ENCODE measurements at regions of chr7 and their contacts with region 1.

Region 1: GRCh38 chr7:107563775-107564552 is at the starts of genes COG5 and DUS4L:
- DNase-seq: peak; percentile 73 to 93 (median 86)
- ATAC-seq: peak; percentile 83
- H3K4me3 ChIP-seq: peak within 1 kb of the TSS; percentile 91 to 97
- H3K4me3 Mint-ChIP-seq: peak within 1 kb of the TSS; percentile 80
- H3K27ac ChIP-seq: peak within 1 kb of the TSS; percentile 95 to 96
- H3K27ac Mint-ChIP-seq: peak within 1 kb of the TSS; percentile 89
- H3K4me1 ChIP-seq: peaks cover 46% of the 10 kb centered on the region
- H3K4me1 Mint-ChIP-seq: peaks cover 65% of the 10 kb centered on the region
- H3K27me3 ChIP-seq: no peaks in the 10 kb centered on the region
- H3K27me3 Mint-ChIP-seq: no peaks in the 10 kb centered on the region
- CTCF ChIP-seq: no peak
- total RNA-seq, gene COG5: 45.7 to 46.8 TPM
- total RNA-seq, gene DUS4L: 13.1 to 16.4 TPM

Region 2: GRCh38 chr7:106914018-106914607 is 649.9 kb before region 1 on chr7:
- CTCF ChIA-PET with region 1: no interaction called
- POLR2A ChIA-PET with region 1: no interaction called
- intact Hi-C with region 1: no loop called
- DNase-seq: no peak
- ATAC-seq: no peak
- H3K4me3 ChIP-seq: no peak overlapping the region
- H3K4me3 Mint-ChIP-seq: no peak overlapping the region
- H3K27ac ChIP-seq: no peak overlapping the region
- H3K27ac Mint-ChIP-seq: no peak overlapping the region
- H3K4me1 ChIP-seq: no peaks in the 10 kb centered on the region
- H3K4me1 Mint-ChIP-seq: no peaks in the 10 kb centered on the region
- H3K27me3 ChIP-seq: no peaks in the 10 kb centered on the region
- H3K27me3 Mint-ChIP-seq: no peaks in the 10 kb centered on the region
- CTCF ChIP-seq: no peak

Region 3: DNA sequence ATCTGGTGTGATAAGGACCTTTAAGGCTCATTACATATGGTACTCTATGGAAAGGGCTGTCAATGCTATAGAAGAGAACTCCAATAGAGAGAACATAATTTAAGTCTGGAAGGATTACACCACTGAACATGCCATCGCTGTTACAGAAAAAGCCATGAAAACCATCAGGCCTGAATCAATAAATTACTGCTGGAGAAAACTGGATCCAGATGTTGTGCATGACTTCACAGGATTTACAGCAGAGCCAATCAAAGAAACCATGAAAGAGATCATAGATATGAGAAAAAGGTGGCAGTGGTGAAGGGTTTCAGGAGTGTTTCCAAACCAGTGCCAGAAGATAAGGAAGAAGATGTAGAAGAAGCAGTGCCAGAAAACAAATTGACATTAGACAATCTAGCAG is 113.0 kb before region 1 on chr7:
- CTCF ChIA-PET with region 1: no interaction called
- POLR2A ChIA-PET with region 1: no interaction called
- intact Hi-C with region 1: no loop called
- DNase-seq: no peak
- ATAC-seq: no peak
- H3K4me3 ChIP-seq: no peak overlapping the region
- H3K4me3 Mint-ChIP-seq: no peak overlapping the region
- H3K27ac ChIP-seq: no peak overlapping the region
- H3K27ac Mint-ChIP-seq: no peak overlapping the region
- H3K4me1 ChIP-seq: no peaks in the 10 kb centered on the region
- H3K4me1 Mint-ChIP-seq: peaks cover 24% of the 10 kb centered on the region
- H3K27me3 ChIP-seq: no peaks in the 10 kb centered on the region
- H3K27me3 Mint-ChIP-seq: no peaks in the 10 kb centered on the region
- CTCF ChIP-seq: no peak

Region 4: DNA sequence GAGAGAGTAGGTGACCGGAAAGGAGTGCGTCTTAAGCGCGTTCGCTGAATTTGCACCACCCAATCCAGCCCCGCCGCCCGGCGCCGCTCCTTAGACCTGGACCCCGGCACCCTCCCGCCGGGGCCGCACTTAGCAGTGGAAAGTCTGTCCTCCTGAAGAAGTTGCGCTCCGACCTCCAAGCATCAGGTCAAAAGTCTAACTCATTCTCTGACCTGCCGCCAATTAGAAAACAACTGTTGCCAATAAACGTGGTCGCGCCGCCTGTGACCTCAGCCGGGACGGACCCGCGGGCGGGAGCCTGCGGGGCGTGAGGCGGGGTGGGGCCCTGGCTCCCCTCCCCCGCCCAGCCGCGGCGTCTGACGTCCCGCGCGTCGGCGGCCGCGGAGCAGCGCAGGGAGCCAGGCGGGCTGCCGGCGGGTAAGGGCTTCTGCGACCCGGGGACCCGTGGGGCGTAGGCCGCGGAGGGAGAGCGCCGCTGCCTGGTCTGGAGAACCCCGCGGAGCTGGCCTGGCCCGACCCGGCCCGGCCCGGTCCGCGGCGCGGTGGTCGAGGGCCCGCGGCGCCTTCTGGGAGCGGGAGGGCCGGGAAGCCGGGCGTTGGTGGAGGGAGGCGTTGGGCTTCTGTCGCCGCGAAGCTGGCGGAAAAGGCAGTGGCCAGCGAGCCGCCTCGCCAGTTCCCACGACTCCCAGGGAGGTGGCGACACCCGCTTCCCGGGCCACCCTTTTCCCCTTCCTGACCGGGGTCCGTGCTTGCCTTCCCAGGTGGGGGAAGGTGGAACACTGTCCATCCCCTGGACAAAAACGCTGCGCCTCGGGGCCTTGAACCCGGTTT is 16.1 kb after region 1 on chr7 and contains the start of gene BCAP29:
- CTCF ChIA-PET with region 1: no interaction called
- POLR2A ChIA-PET with region 1: interaction called, 17 read pairs
- intact Hi-C with region 1: loop called (anchors 1 to 2 kb)
- DNase-seq: peak; percentile 22 to 87 (median 59)
- ATAC-seq: peak; percentile 95
- H3K4me3 ChIP-seq: peak within 1 kb of the TSS; percentile 81 to 91
- H3K4me3 Mint-ChIP-seq: peak within 1 kb of the TSS; percentile 90
- H3K27ac ChIP-seq: peak within 1 kb of the TSS; percentile 67 to 69
- H3K27ac Mint-ChIP-seq: peak within 1 kb of the TSS; percentile 91
- H3K4me1 ChIP-seq: peaks cover 14% of the 10 kb centered on the region
- H3K4me1 Mint-ChIP-seq: peaks cover 25% of the 10 kb centered on the region
- H3K27me3 ChIP-seq: no peaks in the 10 kb centered on the region
- H3K27me3 Mint-ChIP-seq: no peaks in the 10 kb centered on the region
- CTCF ChIP-seq: no peak
- total RNA-seq, gene BCAP29: 7.9 to 9.0 TPM

Region 5: GRCh38 chr7:108525985-108526767 is 962.2 kb after region 1 on chr7 and contains the start of gene PNPLA8:
- CTCF ChIA-PET with region 1: no interaction called
- POLR2A ChIA-PET with region 1: no interaction called
- intact Hi-C with region 1: loop called in 1 of 2 experiments (anchors 5 kb)
- DNase-seq: peak; percentile 100
- ATAC-seq: peak; percentile 90
- H3K4me3 ChIP-seq: peak within 1 kb of the TSS; percentile 80 to 93
- H3K4me3 Mint-ChIP-seq: peak within 1 kb of the TSS; percentile 97
- H3K27ac ChIP-seq: peak within 1 kb of the TSS; percentile 94 to 96
- H3K27ac Mint-ChIP-seq: peak within 1 kb of the TSS; percentile 99
- H3K4me1 ChIP-seq: peaks cover 21% of the 10 kb centered on the region
- H3K4me1 Mint-ChIP-seq: peaks cover 48% of the 10 kb centered on the region
- H3K27me3 ChIP-seq: no peaks in the 10 kb centered on the region
- H3K27me3 Mint-ChIP-seq: no peaks in the 10 kb centered on the region
- CTCF ChIP-seq: no peak
- total RNA-seq, gene PNPLA8: 98.6 to 101 TPM

Region 6: DNA sequence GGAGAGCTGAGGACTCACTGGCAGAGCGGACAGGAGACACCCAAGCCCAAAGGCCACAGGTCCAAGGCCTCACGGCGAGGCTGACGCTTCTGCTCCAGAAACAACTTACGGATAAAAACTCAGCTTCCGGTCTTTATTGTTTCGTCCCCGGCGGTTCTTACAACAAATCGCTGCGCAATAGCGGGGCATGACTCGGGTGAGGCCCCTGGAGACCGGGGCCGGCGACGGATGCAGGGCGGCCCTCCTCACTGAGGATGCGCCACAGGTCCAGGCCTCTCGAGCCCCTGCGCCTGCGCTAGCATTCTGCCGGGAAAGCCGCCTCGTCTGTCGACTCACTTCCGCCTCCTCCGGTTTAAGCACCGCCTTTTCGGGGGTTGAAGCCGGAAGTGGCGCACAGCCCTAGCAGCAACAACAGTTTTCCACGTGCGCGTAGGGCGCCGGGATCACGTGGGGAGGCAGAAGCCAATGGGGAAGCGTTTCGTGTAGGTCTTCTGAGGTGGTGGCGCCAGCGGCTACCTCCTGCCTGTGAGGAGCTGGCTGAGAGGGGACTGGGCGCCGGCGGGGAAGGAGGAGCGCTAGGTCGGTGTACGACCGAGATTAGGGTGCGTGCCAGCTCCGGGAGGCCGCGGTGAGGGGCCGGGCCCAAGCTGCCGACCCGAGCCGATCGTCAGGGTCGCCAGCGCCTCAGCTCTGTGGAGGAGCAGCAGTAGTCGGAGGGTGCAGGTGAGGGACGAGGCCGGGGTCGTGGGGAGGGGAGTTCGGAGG is 1005.6 kb after region 1 on chr7 and contains the starts of genes DNAJB9 and THAP5:
- CTCF ChIA-PET with region 1: no interaction called
- POLR2A ChIA-PET with region 1: no interaction called
- intact Hi-C with region 1: loop called in 1 of 2 experiments (anchors 5 kb)
- DNase-seq: peak; percentile 98 to 100 (median 99)
- ATAC-seq: peak; percentile 84
- H3K4me3 ChIP-seq: peak within 1 kb of the TSS; percentile 90 to 96
- H3K4me3 Mint-ChIP-seq: peak within 1 kb of the TSS; percentile 90
- H3K27ac ChIP-seq: peak within 1 kb of the TSS; percentile 99 to 100
- H3K27ac Mint-ChIP-seq: peak within 1 kb of the TSS; percentile 98
- H3K4me1 ChIP-seq: peaks cover 45% of the 10 kb centered on the region
- H3K4me1 Mint-ChIP-seq: peaks cover 65% of the 10 kb centered on the region
- H3K27me3 ChIP-seq: no peaks in the 10 kb centered on the region
- H3K27me3 Mint-ChIP-seq: no peaks in the 10 kb centered on the region
- CTCF ChIP-seq: no peak
- total RNA-seq, gene DNAJB9: 66.7 to 67.7 TPM
- total RNA-seq, gene THAP5: 10.7 to 13.5 TPM